GM10248 (cell line): ENCODE measurements at regions of chr10 and their contacts with region 1.

Region 1: DNA sequence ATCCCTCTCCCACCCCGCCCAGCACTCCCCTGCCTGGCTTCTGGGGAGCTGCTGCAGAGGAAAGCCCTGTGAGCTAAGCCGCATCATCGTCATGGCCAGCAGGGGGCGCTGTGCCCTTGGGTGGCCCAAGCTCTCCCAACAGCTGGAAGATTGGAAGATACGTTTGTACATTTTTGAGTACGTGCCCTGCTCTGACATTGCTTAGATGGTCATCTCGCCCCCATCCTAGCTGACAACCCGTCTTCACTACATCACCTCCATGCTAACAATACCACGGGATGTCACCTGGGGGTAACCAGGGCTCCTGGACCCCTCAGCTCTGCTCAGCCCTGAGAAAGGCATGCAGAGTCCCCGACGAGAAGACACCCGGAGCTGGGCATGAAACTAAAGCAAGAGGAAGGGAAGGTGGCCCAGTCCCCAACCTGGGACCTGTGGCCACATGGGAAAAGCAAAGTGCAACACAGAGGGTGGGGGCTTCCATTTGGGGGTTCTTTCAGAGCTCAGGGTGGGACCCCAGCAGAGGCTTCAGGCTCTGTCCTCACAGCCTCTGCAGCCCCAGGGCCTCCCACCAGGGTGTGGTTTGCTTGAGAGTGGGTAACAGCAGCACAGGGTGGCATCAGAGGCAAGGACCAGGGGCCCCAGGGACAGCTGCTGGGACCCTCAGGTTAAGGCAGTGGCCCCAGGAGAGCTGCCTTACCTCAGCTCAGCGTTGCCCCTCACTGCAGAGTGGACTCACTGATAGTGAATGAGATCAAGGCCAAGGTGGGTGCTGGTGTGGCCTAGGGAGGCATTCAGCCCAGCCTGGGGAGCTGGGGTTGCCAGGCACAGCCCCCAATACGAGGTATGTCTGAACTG is 136.7 kb downstream of the PTPN20 start:
- DNase-seq: peak; percentile 78
- CTCF ChIP-seq: peak; percentile 84

Region 2: DNA sequence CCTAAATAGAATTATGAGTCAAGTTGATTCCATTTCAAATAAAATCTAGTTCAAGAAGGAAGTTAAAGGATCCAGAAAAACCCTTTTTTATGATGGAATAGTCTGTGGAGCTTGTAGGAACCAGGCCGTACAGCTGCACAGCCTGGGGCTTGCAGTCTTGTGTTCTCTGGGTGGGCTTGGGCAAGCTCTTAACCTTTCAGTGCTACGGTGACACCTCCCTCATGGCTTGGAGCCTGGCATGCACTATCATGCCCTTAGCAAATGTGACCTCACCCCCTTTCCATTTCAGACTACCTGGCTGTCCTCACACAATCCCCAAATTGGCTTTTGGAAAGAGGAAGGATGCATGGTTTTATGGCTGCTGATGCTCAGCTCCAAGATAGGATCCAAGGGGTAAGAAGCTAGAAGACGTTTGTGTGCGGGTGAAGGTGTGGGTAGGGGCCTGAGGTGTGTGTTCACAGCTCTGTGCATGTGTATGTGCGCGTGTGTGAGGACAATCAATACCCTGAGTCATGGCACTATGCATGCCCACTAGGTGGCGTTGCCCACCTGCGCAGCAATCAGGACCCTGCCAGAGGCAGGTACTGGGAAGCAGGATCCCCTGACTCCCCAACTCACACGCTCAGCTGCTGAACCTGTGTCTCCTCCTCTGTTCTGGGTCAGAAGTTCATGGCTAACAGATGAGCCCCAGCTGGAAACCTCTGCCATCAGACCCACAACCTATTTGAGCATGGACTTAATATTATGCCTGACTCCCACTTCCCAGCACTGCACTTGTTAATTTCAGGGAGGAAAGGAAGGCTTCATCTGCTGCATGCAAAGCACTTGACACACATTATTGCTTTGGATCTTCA is 23.3 kb before region 1 on chr10:
- CTCF ChIA-PET with region 1: interaction called, 12 read pairs
- POLR2A ChIA-PET with region 1: no interaction called
- DNase-seq: peak; percentile 82
- CTCF ChIP-seq: peak; percentile 82

Region 3: DNA sequence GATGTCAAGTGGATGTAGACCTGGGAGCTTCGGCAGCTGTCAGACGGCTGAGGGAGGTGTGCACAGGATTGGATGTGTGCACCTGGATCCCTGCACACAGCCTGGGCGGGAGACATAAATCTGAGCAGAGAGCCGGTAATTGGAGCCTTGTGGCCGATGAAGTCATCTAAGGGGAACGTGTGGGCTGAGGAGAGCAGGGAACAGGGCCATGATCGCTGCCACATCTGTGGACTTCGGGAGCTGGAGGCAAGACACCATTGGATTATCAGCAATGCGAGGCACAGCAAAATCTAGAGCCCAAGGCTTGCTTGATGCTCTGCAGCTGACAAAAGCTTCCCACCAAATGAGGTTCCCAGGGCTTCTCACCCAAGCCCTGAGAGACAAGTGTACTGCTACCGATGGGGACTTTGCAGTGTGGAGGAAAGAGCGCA is 11.1 kb after region 1 on chr10:
- CTCF ChIA-PET with region 1: interaction called, 10 read pairs
- POLR2A ChIA-PET with region 1: no interaction called
- DNase-seq: no peak
- CTCF ChIP-seq: no peak

Region 4: DNA sequence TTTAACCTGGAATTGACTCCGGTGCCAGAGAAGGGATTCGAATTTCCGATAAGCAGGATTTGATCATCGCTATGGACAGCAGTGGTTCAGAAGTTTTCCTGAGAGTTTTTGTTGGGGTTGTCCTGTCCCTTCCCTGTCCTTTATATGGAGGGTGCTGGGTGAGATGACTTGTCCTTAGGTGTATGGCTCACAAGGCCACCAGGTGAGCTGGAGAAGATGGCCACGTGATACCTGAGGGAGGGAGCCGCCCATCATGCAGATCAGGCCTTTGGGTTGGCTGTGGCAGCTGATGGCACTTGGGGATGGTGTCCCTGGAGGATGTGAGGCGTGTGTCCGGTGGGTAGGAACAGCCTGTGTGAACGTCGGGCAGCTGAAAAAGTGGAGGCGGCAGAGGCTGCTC is 51.1 kb after region 1 on chr10:
- CTCF ChIA-PET with region 1: no interaction called
- POLR2A ChIA-PET with region 1: no interaction called
- DNase-seq: no peak
- CTCF ChIP-seq: no peak

Region 5: GRCh38 chr10:47306387-47307210 is 258.7 kb after region 1 on chr10:
- CTCF ChIA-PET with region 1: interaction called, 125 read pairs
- POLR2A ChIA-PET with region 1: no interaction called
- DNase-seq: no peak
- CTCF ChIP-seq: no peak

Region 6: DNA sequence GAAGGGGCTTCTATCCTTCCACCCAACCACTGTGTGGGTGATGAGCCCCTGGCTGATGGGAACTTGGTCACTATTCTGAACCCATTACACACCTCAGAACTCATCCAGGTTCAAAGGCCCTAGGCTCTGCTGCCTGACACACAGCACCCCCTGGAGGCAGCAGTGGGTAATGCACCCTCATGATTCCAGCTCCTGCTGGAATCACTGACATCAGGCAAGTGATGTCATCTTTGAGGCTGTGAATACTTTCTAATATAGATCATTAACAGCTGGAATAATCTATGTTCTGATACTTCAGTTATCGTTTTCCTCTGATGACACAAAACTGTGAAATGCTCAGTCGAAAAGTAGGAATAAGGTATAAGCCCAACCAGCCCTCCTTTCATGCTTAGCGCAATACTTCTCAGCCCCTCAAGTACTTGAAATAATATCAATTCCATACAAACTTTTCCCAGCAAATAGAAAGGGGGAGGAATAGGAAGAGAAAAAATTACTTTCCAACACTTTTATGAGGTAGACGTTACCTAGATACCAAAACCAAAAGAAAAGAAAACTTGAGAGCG is 292.8 kb after region 1 on chr10:
- CTCF ChIA-PET with region 1: interaction called, 18 read pairs
- POLR2A ChIA-PET with region 1: no interaction called
- DNase-seq: peak; percentile 77
- CTCF ChIP-seq: peak; percentile 94